ENCODE measurements at regions of chr7 and their contacts with region 1.

Region 1: GRCh38 chr7:75994388-75995051 is at the start of gene TMEM120A:
- DNase-seq: peak; percentile 93
- ATAC-seq: peak; percentile 91
- H3K4me3 ChIP-seq: peak within 1 kb of the TSS; percentile 91
- H3K27ac ChIP-seq: no peak within 1 kb of the TSS
- H3K4me1 ChIP-seq: peaks cover 9% of the 10 kb centered on the region
- H3K27me3 ChIP-seq: no peaks in the 10 kb centered on the region
- CTCF ChIP-seq: no peak
- total RNA-seq, gene TMEM120A: 17.9 and 18.6 TPM in 2 replicates

Region 2: DNA sequence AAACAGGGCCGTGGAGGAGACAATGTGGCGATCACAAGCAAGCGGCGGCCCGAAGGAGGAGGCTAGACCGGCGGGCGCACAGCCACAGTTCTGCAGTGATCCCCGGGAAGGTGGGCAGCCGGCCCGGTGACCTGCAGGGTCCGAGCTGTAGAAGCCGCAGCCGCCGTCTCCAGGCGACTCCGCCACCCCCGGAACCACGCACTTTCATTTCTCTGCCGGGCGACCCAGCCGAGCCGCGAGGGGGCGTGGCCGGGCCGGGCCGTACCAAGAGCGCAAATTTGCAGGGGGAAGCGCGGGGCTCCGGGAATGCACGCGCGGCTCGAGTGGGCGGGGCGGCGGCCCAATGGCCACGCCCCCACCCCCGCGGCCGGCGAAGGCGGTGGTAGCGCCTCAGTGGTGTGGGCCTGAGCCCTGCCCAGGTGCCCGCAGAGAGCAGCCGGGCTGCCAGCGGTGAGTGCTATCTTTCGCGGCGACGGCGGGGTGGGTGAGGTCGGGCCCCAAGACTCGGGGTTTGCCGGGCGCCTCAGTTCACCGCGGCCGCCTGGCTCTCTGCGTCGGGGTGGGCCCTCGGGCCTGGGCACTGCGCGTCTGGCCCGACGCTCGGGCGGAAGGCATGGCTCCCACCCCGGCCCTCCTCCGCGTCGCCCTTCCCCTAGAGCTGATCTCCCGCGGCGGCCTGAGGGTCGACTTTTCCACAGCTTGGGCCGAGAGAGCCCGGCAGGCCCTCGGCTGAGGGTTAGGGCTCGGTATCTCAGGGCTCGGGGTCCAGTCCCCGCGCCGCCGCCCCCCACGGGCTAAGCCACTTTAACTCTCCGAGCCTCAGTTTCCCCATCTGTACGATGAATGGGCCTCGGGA is 79.6 kb before region 1 on chr7 and contains the start of gene POR:
- CTCF ChIA-PET with region 1: interaction called, 3 read pairs
- POLR2A ChIA-PET with region 1: no interaction called
- intact Hi-C with region 1: loop called (anchors 10 kb)
- DNase-seq: peak; percentile 94
- ATAC-seq: peak; percentile 94
- H3K4me3 ChIP-seq: peak within 1 kb of the TSS; percentile 92
- H3K27ac ChIP-seq: no peak within 1 kb of the TSS
- H3K4me1 ChIP-seq: peaks cover 15% of the 10 kb centered on the region
- H3K27me3 ChIP-seq: no peaks in the 10 kb centered on the region
- CTCF ChIP-seq: no peak
- total RNA-seq, gene POR: 112 and 119 TPM in 2 replicates